Activated T-helper 2 cell treated with anti-CD3 and anti-CD28 coated beads, Interferon-gamma antibody, Interleukin-2, Interleukin-4, amounts not matched to agents 10 μg/mL and 5 μg/mL and 100 μg/mL, durations not matched to agents 14 hours and 24 hours and 36 hours (primary cell): ENCODE measurements at regions of chr12 and their contacts with region 1.

Region 1: GRCh38 chr12:3988519-3989448 is 115.6 kb upstream of the PARP11 start:
- DNase-seq: no peak
- H3K4me3 Mint-ChIP-seq: peak overlapping the region; percentile 1
- H3K27ac Mint-ChIP-seq: peak overlapping the region; percentile 75
- H3K4me1 Mint-ChIP-seq: peaks cover 28% of the 10 kb centered on the region
- H3K27me3 Mint-ChIP-seq: peaks cover 20% of the 10 kb centered on the region

Region 2: DNA sequence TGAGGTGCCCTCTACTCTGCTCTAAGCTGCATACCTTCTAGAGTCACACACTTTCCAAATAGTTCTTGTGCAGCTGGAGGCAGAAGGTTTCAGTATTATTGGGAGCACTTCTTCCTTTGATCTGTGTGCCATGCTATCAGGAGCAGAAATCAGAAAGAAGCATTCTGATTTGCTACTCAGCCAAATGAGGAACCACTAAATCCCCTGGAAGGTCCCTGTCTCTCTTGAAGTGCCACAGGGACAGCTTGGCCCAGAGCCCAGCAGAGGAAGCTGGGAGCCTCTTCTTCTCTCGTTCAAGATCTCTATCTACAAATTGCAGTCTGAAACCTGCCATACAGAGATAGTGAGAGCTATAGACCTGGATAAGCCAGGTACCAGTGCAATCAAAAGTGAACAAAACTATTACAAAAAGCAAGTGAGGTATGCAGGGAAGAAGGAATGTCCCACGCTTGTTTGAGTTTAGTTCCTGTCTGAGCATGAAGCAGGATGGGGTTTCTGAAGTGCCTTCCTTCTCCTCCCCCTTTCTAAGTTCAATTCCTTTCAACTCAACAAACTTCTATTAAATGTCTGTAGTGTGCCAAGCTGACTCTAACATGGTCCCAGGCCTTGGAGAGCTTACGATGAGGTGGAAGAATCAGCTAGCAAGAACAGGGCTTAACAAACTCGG is 14.7 kb before region 1 on chr12:
- intact Hi-C with region 1: loop called (anchors 1 kb)
- DNase-seq: no peak
- H3K4me3 Mint-ChIP-seq: peak overlapping the region; percentile 30
- H3K27ac Mint-ChIP-seq: peak overlapping the region; percentile 84
- H3K4me1 Mint-ChIP-seq: peaks cover 63% of the 10 kb centered on the region
- H3K27me3 Mint-ChIP-seq: peaks cover 2% of the 10 kb centered on the region